T-cell (primary cell): ENCODE measurements at regions of chr12 and their contacts with region 1.

Region 1: DNA sequence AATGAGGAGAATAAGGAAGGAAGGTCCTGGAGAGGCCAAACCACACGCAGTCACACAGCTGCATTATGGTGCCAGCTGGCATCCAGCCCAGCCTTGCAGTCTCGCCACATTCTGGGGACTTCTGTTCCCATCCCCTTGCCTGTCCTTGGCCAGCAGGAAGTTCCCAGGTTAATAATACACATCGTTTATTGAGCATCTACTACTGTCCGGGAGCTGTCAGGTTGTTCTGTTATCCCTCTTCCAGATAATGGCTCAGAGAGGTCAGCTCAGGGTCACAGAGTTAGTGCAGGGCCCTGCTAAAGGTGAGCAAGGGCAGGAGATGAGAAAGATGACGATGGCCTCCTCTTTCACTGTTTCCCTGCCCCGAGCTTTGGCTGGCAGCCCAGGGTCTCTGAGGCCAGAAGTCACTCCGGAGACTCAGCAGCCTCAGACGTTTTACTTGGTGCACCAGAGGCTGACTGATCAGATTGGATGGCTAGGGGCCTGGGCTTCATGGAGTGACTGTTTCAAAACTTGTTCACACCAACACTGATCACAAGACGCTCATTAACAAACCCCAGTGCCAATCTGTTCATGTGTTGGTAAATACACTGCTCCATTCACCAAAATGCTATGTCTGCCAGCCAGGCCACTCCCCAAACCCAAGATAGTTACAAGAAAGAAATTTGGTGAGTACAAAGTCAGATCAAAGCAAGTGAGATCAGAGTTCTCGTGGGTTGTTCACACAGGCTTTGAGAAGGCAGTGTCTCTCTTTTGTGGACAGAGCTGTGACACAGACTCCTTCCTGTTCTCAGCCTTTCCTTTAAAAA is 79.2 kb downstream of the B4GALNT3 start:
- DNase-seq: peak in 34 of 35 experiments; percentile 35 to 86 (median 60)
- ATAC-seq: peak; percentile 96 to 99 (median 98)
- H3K4me3 ChIP-seq: peak overlapping the region in 1 of 2 donors; percentile 10
- H3K4me3 Mint-ChIP-seq: peak overlapping the region; percentile 8 to 54 (median 50)
- H3K27ac ChIP-seq: peak overlapping the region; percentile 64
- H3K27ac Mint-ChIP-seq: peak overlapping the region; percentile 71 to 82
- H3K4me1 ChIP-seq: peaks cover 16 to 34% of the 10 kb centered on the region in 2 experiments
- H3K4me1 Mint-ChIP-seq: peaks cover 22 to 39% (median 27%) of the 10 kb centered on the region in 3 donors
- H3K27me3 ChIP-seq: peaks cover 0 to 20% of the 10 kb centered on the region in 2 experiments
- H3K27me3 Mint-ChIP-seq: peaks cover 3% of the 10 kb centered on the region in 2 donors

Region 2: GRCh38 chr12:459430-460258 is 79.3 kb before region 1 on chr12 and contains the start of gene B4GALNT3:
- CTCF ChIA-PET with region 1: interaction called, 13 to 17 read pairs
- POLR2A ChIA-PET with region 1: no interaction called
- DNase-seq: peak in 22 of 35 experiments; percentile 5 to 53 (median 24)
- ATAC-seq: peak; percentile 74 to 76 (median 74)
- H3K4me3 ChIP-seq: peak within 1 kb of the TSS; percentile 56 to 60
- H3K4me3 Mint-ChIP-seq: peak within 1 kb of the TSS; percentile 76 to 93 (median 83)
- H3K27ac ChIP-seq: no peak within 1 kb of the TSS
- H3K27ac Mint-ChIP-seq: no peak within 1 kb of the TSS
- H3K4me1 ChIP-seq: peaks cover 0 to 16% of the 10 kb centered on the region in 2 experiments
- H3K4me1 Mint-ChIP-seq: peaks cover 12 to 27% (median 23%) of the 10 kb centered on the region in 3 donors
- H3K27me3 ChIP-seq: peaks cover 2 to 18% of the 10 kb centered on the region in 2 experiments
- H3K27me3 Mint-ChIP-seq: peaks cover 3 to 22% of the 10 kb centered on the region in 2 donors
- total RNA-seq, gene B4GALNT3: 0.70 to 3.8 (median 2.0) TPM